ENCODE measurements at regions of chr2 and their contacts with region 1.

Region 1: GRCh38 chr2:165401285-165401852 is 68.1 kb upstream of the CSRNP3 start:
- DNase-seq: peak; percentile 91
- H3K4me3 ChIP-seq: no peak overlapping the region
- H3K27ac ChIP-seq: peak overlapping the region; percentile 61
- H3K4me1 ChIP-seq: peaks cover 55% of the 10 kb centered on the region
- H3K27me3 ChIP-seq: no peaks in the 10 kb centered on the region
- CTCF ChIP-seq: peak; percentile 83

Region 2: DNA sequence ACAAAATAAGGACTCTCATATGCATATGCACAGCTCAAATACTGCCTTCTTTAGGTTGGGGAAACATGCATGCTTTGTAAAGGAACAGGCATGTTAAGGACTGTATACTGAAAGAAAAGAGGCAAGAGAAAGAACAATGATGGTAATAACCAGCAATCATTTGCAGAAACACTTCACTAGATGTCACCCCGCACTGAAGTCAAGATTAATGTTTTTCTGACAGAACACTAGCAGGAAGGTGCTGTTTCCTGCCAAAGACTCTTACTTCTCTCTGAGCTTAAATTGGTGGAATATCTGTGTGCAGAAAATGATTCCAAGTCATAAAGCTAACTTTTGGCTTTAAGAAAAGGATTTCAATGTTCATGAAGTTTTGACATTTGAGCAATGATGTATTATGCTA is 48.8 kb after region 1 on chr2:
- CTCF ChIA-PET with region 1: interaction called, 4 read pairs
- POLR2A ChIA-PET with region 1: no interaction called
- intact Hi-C with region 1: loop called (anchors 5 kb)
- DNase-seq: peak; percentile 80
- H3K4me3 ChIP-seq: no peak overlapping the region
- H3K27ac ChIP-seq: peak overlapping the region; percentile 87
- H3K4me1 ChIP-seq: peaks cover 47% of the 10 kb centered on the region
- H3K27me3 ChIP-seq: no peaks in the 10 kb centered on the region
- CTCF ChIP-seq: peak; percentile 40; the same call in 1 of the 2 replicates

Region 3: DNA sequence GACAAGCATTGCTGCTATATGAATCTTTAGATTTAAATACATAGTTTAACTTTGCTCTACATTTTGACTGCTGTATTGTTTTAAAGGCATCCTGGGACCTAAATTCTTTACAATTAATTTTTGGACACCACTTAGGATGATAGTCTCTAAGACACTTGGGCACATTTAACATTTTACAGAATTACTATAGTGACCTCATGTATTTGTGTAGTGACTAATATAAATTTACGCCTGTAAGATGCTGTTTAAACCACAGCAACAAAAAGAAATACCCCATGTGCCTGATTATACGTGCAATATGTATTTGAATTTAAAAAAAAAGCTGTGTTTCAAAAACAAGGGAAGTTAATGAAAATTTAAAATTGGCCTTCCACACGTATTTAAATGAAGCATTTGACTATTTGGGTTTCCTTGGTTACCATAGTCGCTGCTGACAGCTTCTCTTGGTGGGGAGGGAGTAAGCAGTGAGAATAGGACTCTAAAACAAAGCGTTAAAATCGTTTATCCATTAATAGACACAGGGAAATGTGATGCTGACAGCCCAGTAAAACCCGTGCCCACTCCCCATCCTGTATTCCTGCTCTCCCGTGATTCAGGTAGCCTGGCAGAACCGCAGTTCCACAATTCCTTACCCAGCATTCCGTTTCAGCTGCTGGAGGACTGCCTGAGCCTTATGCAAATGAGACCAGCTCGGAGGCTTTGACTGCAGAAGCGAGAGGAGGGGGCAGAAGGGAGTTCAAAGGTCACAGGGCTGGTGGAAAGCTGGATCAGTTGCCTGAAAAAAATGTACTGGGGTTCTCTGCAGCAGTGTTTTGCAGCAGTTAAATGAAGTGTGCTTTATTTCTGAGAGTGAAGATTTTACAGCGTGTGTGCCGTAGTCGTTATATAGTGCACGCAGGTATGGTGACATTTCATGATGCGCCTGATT is 172.4 kb after region 1 on chr2:
- CTCF ChIA-PET with region 1: no interaction called
- POLR2A ChIA-PET with region 1: interaction called, 3 read pairs
- intact Hi-C with region 1: loop called (anchors 5 kb)
- DNase-seq: peak; percentile 91
- H3K4me3 ChIP-seq: peak overlapping the region; percentile 47
- H3K27ac ChIP-seq: peak overlapping the region; percentile 69
- H3K4me1 ChIP-seq: peaks cover 60% of the 10 kb centered on the region
- H3K27me3 ChIP-seq: no peaks in the 10 kb centered on the region
- CTCF ChIP-seq: no peak

Region 4: DNA sequence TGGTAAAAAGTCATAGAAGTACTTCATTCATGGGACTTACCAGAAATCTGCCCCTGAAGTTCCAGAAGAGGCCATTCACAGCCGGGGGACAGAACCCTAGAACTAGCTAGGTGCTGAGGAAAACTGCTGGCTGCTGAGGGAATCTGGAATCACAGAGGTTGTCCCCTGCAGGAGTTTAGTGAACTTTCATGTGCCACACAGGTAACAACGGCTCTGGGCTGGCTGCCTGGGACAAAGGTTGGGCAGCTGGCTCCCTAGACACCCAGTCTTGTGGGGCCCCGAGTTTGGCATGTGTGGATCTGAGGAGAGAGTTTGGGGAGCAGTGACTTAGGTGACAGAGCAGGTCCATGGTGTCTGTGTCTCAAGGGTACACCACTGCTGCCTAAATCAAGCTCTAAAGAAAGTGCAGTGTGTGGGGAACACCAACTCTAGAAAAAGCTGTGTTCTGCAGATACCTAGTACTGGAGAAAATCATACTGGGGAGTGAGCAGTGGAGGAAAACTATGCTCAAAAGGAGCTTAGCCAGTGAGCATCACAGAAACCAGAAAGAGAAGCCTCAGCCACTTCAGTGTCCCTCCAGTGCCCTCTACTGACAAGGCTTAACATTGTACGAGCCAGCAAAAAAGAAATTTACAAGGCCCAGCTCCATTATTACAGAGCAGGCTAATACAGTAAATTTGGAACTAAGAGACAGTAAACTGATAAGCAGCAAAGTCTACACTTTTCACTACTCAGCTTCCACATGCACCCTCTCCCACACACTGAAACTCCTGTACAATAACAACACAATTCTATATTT is 377.5 kb after region 1 on chr2:
- CTCF ChIA-PET with region 1: interaction called, 4 read pairs
- POLR2A ChIA-PET with region 1: no interaction called
- intact Hi-C with region 1: loop called (anchors 2 kb)
- DNase-seq: peak; percentile 66
- H3K4me3 ChIP-seq: no peak overlapping the region
- H3K27ac ChIP-seq: no peak overlapping the region
- H3K4me1 ChIP-seq: no peaks in the 10 kb centered on the region
- H3K27me3 ChIP-seq: no peaks in the 10 kb centered on the region
- CTCF ChIP-seq: peak; percentile 47

Region 5: DNA sequence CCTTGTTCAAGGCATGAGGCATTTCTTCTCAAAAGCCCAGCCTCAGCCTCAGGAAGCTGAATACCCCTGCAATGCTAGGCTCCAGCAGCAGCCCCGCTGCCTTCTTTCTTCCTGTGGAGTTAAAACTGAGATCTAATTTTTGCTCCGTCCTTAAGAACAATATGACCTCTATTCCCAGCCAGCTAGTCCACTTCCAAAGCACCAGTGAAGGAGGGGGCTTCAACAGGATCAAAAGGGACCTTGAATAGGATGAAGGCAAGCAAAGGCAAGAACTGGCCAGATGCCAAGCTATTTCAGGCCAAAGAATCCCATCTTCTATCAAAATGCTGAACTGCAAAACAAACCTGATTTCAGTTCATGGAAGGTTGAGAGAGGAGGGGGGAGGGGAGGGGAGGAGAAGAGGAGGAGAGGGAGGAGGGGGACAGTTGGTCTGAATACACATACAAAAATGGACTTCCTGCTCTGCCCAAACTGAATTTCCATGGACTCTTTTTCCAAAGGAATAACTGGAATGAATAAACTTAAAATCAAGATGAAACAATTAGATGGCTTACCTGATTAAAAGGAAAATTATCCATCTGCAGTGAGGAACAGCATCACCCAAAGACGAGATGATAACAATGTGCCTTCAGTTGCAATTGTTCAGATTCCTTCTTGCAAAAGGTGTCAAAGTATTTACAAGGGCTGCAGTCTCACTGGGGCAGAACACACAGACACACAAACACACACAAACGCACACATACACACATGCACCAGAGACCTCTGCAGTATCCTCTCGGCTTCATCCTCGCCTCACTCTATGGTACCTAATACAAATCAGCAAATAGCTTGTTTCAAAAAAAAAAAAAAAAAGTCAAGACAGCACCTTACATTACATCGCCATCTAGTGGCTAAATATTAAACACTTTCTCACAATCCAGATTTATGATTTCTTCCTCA is 726.1 kb after region 1 on chr2 and contains the start of gene SCN1A:
- CTCF ChIA-PET with region 1: no interaction called
- POLR2A ChIA-PET with region 1: no interaction called
- intact Hi-C with region 1: loop called (anchors 10 kb)
- DNase-seq: peak; percentile 68
- H3K4me3 ChIP-seq: no peak within 1 kb of the TSS
- H3K27ac ChIP-seq: no peak within 1 kb of the TSS
- H3K4me1 ChIP-seq: peaks cover 12% of the 10 kb centered on the region
- H3K27me3 ChIP-seq: no peaks in the 10 kb centered on the region
- CTCF ChIP-seq: peak; percentile 75
- total RNA-seq, gene SCN1A: 0.62 and 0.83 TPM in 2 replicates

Measured in A673 (cell line).